ENCODE measurements at regions of chr1 and their contacts with region 1.

Region 1: GRCh38 chr1:119549719-119550132 is 42.7 kb downstream of the HSD3B1 start:
- DNase-seq: peak in 3 of 5 donors; percentile 39 to 56 (median 44)
- ATAC-seq: peak; percentile 64 to 89 (median 87)
- H3K4me3 ChIP-seq: no peak overlapping the region
- H3K27ac ChIP-seq: no peak overlapping the region
- H3K4me1 ChIP-seq: peaks cover 0 to 16% (median 6%) of the 10 kb centered on the region in 12 donors
- H3K27me3 ChIP-seq: no peaks in the 10 kb centered on the region
- CTCF ChIP-seq: peak in 11 of 12 donors; percentile 41 to 64 (median 52)
- POLR2A ChIP-seq: no peak

Region 2: DNA sequence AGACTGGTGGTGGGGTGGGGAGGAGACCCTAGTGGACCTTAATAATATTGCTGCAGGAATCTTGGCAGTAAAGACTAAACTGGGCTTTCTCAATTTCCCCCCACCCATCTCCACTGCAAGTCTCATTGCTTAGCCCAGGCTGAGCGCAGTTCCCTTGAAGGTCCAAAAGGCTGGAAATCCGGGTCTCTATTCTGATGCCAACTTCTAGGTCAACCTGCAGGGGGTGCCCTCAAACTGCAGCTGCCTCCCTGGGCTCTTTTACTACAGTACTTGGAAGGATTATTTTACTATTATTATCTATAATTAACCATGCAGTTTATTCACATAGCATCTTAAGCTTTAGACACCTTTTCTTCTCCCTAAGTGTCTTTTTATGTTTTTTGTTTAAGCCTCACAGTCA is 323.9 kb before region 1 on chr1:
- intact Hi-C with region 1: loop called in 1 of 10 experiments (anchors 5 kb)
- DNase-seq: no peak
- ATAC-seq: no peak
- H3K4me3 ChIP-seq: no peak overlapping the region
- H3K27ac ChIP-seq: no peak overlapping the region
- H3K4me1 ChIP-seq: peaks cover 0 to 8% (median 0%) of the 10 kb centered on the region in 12 donors
- H3K27me3 ChIP-seq: no peaks in the 10 kb centered on the region
- CTCF ChIP-seq: no peak
- POLR2A ChIP-seq: no peak

Region 3: GRCh38 chr1:119475866-119476439 is 73.8 kb before region 1 on chr1:
- intact Hi-C with region 1: no loop called
- DNase-seq: peak in 3 of 5 donors; percentile 13 to 31 (median 26)
- ATAC-seq: peak; percentile 47 to 77 (median 61)
- H3K4me3 ChIP-seq: no peak overlapping the region
- H3K27ac ChIP-seq: no peak overlapping the region
- H3K4me1 ChIP-seq: no peaks in the 10 kb centered on the region
- H3K27me3 ChIP-seq: no peaks in the 10 kb centered on the region
- CTCF ChIP-seq: peak in 10 of 12 donors; percentile 23 to 61 (median 44)
- POLR2A ChIP-seq: no peak

Region 4: DNA sequence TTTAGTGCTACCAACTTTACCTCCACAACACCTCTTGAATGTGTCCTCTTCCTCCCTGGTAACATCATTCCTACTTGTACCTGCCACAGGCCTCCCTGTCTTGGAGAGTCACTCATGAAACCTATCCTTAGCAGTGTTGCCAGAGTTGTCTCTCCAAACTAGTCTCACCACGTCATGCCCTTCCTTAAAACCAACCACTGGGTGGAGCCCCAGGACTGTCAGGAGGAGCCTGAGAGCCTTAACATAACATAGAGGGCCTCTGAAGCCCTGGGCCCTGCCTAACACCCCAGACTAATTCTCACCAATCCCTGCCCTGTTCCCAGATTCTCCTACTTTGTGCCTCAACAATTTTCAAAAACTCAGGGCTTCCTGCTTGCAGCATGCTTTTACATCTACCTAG is 33.1 kb after region 1 on chr1:
- intact Hi-C with region 1: no loop called
- DNase-seq: peak; percentile 32 to 60 (median 53)
- ATAC-seq: peak; percentile 72 to 92 (median 90)
- H3K4me3 ChIP-seq: no peak overlapping the region
- H3K27ac ChIP-seq: no peak overlapping the region
- H3K4me1 ChIP-seq: peaks cover 0 to 8% (median 0%) of the 10 kb centered on the region in 12 donors
- H3K27me3 ChIP-seq: no peaks in the 10 kb centered on the region
- CTCF ChIP-seq: peak; percentile 22 to 61 (median 43)
- POLR2A ChIP-seq: no peak

Region 5: DNA sequence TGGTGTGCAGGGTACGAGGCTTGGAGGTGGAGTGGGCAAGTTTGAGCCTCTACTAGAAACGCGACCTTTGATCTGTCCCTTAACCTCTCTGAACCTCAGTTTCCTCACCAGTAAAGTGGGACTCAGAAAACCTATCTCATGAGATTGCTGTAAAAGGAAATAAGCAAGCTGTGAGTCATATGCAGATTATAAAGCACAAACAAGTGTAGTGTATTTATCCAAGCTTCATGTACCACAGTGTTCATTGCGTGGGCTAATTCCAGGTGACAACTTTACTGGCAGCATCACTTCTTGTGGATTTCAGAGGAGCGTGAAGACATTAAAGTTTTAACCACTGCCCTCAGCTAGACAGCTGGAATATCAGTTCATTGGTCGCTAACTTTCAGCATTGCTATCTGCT is 54.0 kb after region 1 on chr1:
- intact Hi-C with region 1: loop called in 1 of 10 experiments (anchors 10 kb)
- DNase-seq: no peak
- ATAC-seq: no peak
- H3K4me3 ChIP-seq: no peak overlapping the region
- H3K27ac ChIP-seq: no peak overlapping the region
- H3K4me1 ChIP-seq: peaks cover 0 to 25% (median 0%) of the 10 kb centered on the region in 12 donors
- H3K27me3 ChIP-seq: no peaks in the 10 kb centered on the region
- CTCF ChIP-seq: no peak
- POLR2A ChIP-seq: no peak

Region 6: GRCh38 chr1:119675349-119676345 is 125.9 kb after region 1 on chr1:
- intact Hi-C with region 1: loop called in 1 of 10 experiments (anchors 5 kb)
- DNase-seq: peak in 4 of 5 donors; percentile 74 to 83 (median 80)
- ATAC-seq: peak; percentile 61 to 87 (median 80)
- H3K4me3 ChIP-seq: peak overlapping the region in 11 of 12 donors; percentile 7 to 62 (median 45)
- H3K27ac ChIP-seq: peak overlapping the region in 5 of 12 donors; percentile 6 to 70 (median 47)
- H3K4me1 ChIP-seq: peaks cover 0 to 21% (median 8%) of the 10 kb centered on the region in 12 donors
- H3K27me3 ChIP-seq: no peaks in the 10 kb centered on the region
- CTCF ChIP-seq: peak; percentile 74 to 93 (median 86)
- POLR2A ChIP-seq: no peak

Region 7: GRCh38 chr1:119748040-119748439 is 198.3 kb after region 1 on chr1:
- intact Hi-C with region 1: no loop called
- DNase-seq: no peak
- ATAC-seq: no peak
- H3K4me3 ChIP-seq: no peak overlapping the region
- H3K27ac ChIP-seq: no peak overlapping the region
- H3K4me1 ChIP-seq: peaks cover 0 to 16% (median 3%) of the 10 kb centered on the region in 12 donors
- H3K27me3 ChIP-seq: no peaks in the 10 kb centered on the region
- CTCF ChIP-seq: no peak
- POLR2A ChIP-seq: no peak

Measured in heart left ventricle (tissue), 16 donors.